Calu3 (cell line): ENCODE measurements at regions of chr12 and their contacts with region 1.

Region 1: DNA sequence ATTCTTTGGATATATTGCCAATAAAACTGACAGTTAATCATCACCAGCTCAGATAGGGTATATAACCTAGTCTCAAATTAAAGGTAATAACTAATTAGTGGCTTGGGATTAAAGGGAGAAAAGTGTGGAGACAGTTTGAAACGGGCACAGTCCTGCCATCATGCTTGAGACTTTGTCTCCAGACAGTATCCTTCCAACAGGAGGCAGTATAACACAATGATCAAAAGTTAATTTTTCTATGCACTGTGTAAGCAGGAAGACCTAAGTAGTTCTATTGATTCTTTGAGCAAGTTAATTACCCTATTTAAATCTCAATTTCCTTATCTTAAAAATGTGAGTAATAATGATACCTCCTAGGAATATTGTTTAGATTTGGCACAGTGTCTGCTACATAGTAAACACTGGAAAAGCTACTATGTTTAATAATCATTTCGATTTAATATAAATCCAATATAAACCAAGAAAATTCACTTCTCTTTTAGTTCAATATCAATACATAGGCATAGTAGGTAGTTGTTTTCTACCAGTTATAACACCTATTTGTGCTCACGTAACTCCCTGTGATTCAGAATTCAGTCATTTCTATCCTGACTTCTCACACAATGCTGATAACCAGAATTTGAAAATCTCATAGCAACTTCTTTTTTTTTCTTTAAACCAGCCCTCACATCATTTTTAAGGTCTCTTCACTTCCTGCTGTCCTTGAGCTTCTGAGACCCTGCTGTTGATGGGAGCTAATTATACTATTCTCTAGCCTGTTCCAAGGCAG is 53.7 kb downstream of the GALNT4 start:
- DNase-seq: peak; percentile 36
- H3K4me3 Mint-ChIP-seq: no peak overlapping the region
- H3K27ac Mint-ChIP-seq: peak overlapping the region; percentile 80
- H3K4me1 Mint-ChIP-seq: peaks cover 56% of the 10 kb centered on the region
- H3K27me3 Mint-ChIP-seq: no peaks in the 10 kb centered on the region
- CTCF ChIP-seq: peak; percentile 67

Region 2: DNA sequence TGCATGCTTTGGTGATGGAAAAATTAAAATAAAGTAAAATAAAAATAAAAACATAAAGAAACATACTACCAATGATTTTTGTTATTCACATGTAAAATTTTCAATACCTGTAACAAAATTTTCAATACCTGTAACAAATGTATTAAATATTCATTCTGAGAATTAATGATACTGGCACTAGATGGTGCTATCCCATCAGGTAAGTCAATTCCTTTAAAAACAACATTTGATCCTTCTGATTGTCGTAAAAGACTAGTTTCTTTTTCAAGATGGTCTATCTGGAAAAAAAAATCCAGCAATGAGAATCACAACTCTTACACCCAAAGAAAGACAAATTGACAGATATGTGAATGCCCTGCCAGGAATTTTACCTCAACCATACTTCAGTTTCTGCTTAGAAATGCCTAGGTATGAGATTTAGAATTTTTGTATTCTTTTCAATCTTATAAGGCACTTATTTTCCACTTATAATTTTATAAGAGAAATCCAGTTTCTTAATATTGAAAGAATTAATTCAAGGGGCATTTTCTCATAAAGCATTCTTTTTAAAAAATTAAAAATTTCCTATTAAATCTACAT is 1359.8 kb before region 1 on chr12:
- CTCF ChIA-PET with region 1: no interaction called
- intact Hi-C with region 1: loop called (anchors 10 kb)
- DNase-seq: no peak
- H3K4me3 Mint-ChIP-seq: peak overlapping the region; percentile 31
- H3K27ac Mint-ChIP-seq: peak overlapping the region; percentile 51
- H3K4me1 Mint-ChIP-seq: no peaks in the 10 kb centered on the region
- H3K27me3 Mint-ChIP-seq: no peaks in the 10 kb centered on the region
- CTCF ChIP-seq: no peak

Region 3: DNA sequence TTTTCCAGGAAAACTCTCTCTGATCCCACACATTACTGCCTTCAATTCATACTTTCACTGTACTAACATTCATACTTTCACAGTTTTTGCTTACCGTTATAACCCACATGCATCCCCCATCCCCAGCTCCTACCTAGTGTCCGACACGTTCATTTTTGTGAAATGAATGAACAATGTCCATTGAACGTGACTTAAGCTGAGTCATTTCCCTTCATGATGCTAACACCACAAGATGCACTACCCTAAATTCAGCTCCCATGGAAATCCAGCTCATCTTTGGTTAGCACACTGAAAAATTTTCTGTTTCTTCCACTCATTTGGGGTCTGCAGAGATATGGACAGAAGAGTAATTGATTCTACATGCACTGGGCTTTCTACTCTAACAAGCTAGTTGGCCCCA is 31.0 kb before region 1 on chr12:
- CTCF ChIA-PET with region 1: no interaction called
- intact Hi-C with region 1: no loop called
- DNase-seq: no peak
- H3K4me3 Mint-ChIP-seq: no peak overlapping the region
- H3K27ac Mint-ChIP-seq: no peak overlapping the region
- H3K4me1 Mint-ChIP-seq: no peaks in the 10 kb centered on the region
- H3K27me3 Mint-ChIP-seq: no peaks in the 10 kb centered on the region
- CTCF ChIP-seq: no peak

Region 4: GRCh38 chr12:89493670-89494302 is 22.9 kb after region 1 on chr12:
- CTCF ChIA-PET with region 1: interaction called, 6 read pairs
- intact Hi-C with region 1: loop called (anchors 2 kb)
- DNase-seq: no peak
- H3K4me3 Mint-ChIP-seq: no peak overlapping the region
- H3K27ac Mint-ChIP-seq: peak overlapping the region; percentile 73
- H3K4me1 Mint-ChIP-seq: peaks cover 57% of the 10 kb centered on the region
- H3K27me3 Mint-ChIP-seq: no peaks in the 10 kb centered on the region
- CTCF ChIP-seq: no peak

Region 5: DNA sequence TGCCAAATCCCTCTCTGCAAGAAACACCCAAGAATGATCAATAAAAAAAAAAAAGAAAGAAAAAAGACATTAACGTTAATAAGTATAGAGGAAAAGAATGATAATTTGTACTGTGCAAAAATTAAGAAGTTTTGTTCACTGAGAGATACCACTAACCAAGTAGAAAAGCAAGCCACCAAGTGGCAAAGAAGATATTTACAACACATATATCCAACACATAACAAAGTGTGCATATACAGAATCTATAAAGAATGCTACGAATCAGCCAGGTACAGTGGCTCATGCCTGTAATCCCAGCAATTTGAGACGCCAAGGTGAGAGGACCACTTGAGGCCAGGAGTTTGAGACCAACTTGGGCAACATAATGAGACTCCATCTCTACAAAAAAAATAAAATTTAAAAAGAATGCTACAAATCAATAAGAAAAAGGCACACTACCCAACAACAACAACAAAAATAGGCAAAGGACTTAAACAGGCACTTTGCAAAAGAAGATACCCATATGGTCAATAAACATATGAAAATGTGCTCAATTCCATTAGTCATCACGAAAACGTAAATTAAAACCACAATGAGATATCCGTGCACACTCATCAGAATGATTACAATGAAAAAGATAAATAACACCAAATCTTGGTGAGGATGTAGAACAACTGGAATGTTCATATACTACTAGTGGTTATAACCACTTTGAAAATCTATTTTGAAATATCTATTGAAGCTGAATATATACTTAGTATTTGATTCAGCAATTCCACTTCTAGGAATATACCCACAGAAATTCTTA is 33.8 kb after region 1 on chr12:
- CTCF ChIA-PET with region 1: no interaction called
- intact Hi-C with region 1: loop called (anchors 5 kb)
- DNase-seq: no peak
- H3K4me3 Mint-ChIP-seq: no peak overlapping the region
- H3K27ac Mint-ChIP-seq: peak overlapping the region; percentile 97
- H3K4me1 Mint-ChIP-seq: peaks cover 66% of the 10 kb centered on the region
- H3K27me3 Mint-ChIP-seq: no peaks in the 10 kb centered on the region
- CTCF ChIP-seq: no peak

Region 6: GRCh38 chr12:89524541-89525285 is 53.8 kb after region 1 on chr12 and contains the start of gene GALNT4:
- CTCF ChIA-PET with region 1: interaction called, 11 read pairs
- intact Hi-C with region 1: loop called (anchors 1 kb)
- DNase-seq: peak; percentile 94
- H3K4me3 Mint-ChIP-seq: peak within 1 kb of the TSS; percentile 98
- H3K27ac Mint-ChIP-seq: peak within 1 kb of the TSS; percentile 94
- H3K4me1 Mint-ChIP-seq: peaks cover 34% of the 10 kb centered on the region
- H3K27me3 Mint-ChIP-seq: no peaks in the 10 kb centered on the region
- CTCF ChIP-seq: peak; percentile 85
- total RNA-seq, gene GALNT4: 67.0 and 70.9 TPM in 2 replicates

Region 7: GRCh38 chr12:89529738-89530137 is 58.8 kb after region 1 on chr12:
- CTCF ChIA-PET with region 1: interaction called, 11 read pairs
- intact Hi-C with region 1: loop called (anchors 1 kb)
- DNase-seq: no peak
- H3K4me3 Mint-ChIP-seq: no peak overlapping the region
- H3K27ac Mint-ChIP-seq: no peak overlapping the region
- H3K4me1 Mint-ChIP-seq: peaks cover 38% of the 10 kb centered on the region
- H3K27me3 Mint-ChIP-seq: no peaks in the 10 kb centered on the region
- CTCF ChIP-seq: peak; percentile 56

Region 8: GRCh38 chr12:89709157-89709994 is 238.5 kb after region 1 on chr12:
- CTCF ChIA-PET with region 1: no interaction called
- intact Hi-C with region 1: loop called (anchors 5 kb)
- DNase-seq: peak; percentile 99
- H3K4me3 Mint-ChIP-seq: peak overlapping the region; percentile 91
- H3K27ac Mint-ChIP-seq: peak overlapping the region; percentile 100
- H3K4me1 Mint-ChIP-seq: peaks cover 24% of the 10 kb centered on the region
- H3K27me3 Mint-ChIP-seq: no peaks in the 10 kb centered on the region
- CTCF ChIP-seq: no peak